KBM-7 (cell line): ENCODE measurements at regions of chrX and their contacts with region 1.

Region 1: DNA sequence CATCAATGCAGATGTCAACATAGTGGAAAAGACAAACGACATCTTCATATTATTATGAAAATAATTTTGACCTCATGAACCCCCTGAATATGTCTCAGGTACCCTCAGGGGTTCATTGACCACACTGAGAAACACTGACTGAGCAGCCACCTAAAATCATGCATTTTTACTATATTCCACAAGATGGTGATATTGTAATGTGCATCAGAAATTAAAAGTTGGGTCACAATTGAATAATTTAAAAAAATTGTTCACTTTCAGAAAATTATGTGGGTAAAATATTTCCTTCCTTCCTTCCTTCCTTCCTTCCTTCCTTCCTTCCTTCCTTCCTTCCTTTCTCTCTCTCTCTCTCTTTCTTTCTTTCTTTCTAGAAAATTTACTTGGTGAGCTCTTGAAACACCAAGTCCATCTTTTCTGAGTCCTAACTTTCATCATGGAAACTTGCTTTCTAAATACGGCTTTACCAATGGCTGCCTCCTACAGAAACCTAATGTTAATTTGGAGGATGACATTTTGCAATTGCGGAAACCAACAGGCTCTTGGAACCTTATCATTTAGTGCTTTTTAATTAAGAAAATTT is 103.6 kb downstream of the RTL3 start:
- DNase-seq: peak; percentile 53

Region 2: DNA sequence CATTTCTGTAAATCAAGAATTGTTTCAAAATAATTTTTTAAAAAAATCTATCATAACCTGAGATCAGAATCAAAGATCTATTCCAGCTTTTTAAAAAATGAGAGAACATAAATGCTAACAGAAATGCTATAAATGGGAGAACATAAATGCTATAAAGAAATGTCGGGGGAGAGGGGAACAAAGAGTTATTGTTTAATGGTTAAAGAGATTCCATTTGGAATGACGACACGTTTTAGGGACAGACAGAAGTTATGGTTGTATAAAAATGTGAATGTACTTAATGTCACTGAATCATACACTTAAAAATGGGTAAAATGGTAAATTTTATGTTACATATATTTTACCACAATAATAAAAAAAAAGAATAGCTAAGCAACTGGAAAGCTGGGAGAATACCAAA is 896.6 kb before region 1 on chrX:
- in situ Hi-C with region 1: no loop called
- DNase-seq: no peak

Region 3: GRCh38 chrX:78517124-78517523 is 38.4 kb before region 1 on chrX:
- in situ Hi-C with region 1: no loop called
- DNase-seq: peak; percentile 52

Region 4: DNA sequence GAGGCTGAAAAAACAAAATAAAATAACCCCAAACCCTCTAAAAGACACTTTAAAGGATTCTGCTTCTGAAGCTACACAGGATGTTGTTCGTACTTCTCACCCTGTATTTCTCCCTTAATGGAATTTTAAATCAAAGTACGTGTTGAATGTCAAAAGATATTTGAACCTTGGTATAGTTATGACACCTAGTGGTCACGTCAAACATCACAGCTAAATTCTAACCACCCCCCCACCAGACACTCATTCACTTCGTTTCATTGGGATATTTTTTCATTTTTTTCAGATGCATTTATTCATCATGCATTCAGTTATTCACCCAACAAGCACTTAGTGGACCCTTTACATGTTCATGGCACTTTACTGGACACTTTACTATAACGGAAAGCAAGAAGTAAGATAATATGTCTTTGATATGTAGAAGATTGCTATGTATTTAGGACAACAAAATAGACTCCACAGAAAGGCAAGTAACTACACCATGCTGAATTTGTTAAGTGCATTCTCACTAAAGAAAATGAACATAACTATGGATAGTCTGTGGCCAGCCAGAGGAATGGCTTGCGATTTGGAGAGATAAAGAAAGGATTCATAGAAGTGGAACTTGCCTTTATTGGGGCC is 526.5 kb after region 1 on chrX:
- in situ Hi-C with region 1: loop called (anchors 25 kb)
- DNase-seq: peak; percentile 86

Region 5: DNA sequence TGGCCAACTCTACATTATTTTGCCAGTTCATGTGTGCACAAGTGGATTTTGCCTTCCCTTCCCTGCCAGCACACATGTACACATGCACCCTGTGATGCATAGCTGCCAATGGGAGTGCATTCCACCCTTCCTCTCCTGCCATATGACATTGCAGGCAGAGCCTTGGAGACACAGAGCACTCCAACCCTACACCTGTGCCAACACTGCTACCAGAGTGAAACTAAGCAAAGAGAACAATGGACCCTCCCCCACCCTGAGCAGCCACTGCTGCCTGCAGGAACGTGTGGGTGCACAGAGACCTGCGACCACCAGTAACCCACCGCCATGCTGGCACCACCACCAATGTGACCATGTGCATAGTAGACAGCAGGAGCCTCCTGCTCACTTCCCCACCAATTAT is 733.2 kb after region 1 on chrX:
- in situ Hi-C with region 1: loop called (anchors 25 kb)
- DNase-seq: no peak

Region 6: DNA sequence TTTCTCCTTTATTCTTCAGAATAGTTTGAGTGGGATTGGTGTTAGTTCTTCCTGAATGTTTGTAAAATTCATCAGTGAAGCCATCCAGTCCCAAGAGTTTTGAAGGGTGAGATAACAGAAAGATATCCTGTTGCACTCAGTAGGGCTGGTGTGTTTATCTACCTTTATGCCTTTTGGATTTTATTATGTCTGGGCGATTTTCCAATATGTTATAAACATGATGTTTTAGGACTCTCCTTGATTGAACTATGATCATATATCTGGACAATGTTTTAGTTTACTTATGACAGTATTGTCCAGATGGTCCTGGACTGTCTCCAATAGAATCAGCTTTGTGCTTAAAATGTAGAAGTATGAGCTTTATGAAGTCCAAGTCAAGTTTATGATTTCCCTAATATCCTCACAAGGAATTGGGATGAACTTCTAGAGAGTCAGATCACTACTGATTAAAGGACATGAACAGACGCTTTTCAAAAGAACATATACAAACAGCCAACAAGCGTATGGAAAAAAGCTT is 889.3 kb after region 1 on chrX:
- in situ Hi-C with region 1: loop called (anchors 25 kb)
- DNase-seq: no peak